ENCODE measurements at regions of chr1 and their contacts with region 1.

Region 1: DNA sequence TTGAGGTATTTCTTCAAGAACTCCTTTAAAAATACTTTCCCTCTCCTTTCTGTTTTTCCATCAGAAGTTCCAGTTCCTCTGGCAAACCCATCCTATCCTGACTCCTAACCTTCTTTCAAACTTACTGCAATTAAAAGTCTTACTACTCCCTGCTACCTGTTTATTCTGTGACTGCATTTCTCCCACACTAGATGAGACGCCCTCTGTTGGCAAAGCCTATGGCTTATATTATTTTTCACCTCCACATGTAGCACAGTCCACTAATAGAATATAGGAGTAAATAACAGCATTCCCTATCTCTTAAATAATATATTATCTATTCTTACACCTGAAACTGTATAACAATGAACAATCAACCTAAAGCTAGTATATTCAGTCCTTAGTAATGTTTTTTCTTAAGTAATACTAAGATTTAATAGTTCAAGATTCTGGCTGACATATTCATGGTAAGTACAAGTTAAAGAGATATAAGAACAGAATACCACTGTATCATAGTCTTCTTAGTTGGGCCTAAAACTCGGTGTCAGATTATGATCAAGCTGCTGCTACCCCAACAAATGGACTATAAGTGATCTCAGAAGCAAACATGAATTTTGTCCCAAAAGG is 54.8 kb downstream of the RAB3GAP2 start:
- DNase-seq: peak; percentile 29
- ATAC-seq: no peak
- H3K4me3 ChIP-seq: no peak overlapping the region
- H3K4me3 Mint-ChIP-seq: no peak overlapping the region
- H3K27ac ChIP-seq: no peak overlapping the region
- H3K27ac Mint-ChIP-seq: peak overlapping the region; percentile 3
- H3K4me1 ChIP-seq: peaks cover 18 to 31% of the 10 kb centered on the region in 2 donors
- H3K4me1 Mint-ChIP-seq: peaks cover 48% of the 10 kb centered on the region
- H3K27me3 ChIP-seq: no peaks in the 10 kb centered on the region
- H3K27me3 Mint-ChIP-seq: no peaks in the 10 kb centered on the region
- CTCF ChIP-seq: peak; percentile 61

Region 2: DNA sequence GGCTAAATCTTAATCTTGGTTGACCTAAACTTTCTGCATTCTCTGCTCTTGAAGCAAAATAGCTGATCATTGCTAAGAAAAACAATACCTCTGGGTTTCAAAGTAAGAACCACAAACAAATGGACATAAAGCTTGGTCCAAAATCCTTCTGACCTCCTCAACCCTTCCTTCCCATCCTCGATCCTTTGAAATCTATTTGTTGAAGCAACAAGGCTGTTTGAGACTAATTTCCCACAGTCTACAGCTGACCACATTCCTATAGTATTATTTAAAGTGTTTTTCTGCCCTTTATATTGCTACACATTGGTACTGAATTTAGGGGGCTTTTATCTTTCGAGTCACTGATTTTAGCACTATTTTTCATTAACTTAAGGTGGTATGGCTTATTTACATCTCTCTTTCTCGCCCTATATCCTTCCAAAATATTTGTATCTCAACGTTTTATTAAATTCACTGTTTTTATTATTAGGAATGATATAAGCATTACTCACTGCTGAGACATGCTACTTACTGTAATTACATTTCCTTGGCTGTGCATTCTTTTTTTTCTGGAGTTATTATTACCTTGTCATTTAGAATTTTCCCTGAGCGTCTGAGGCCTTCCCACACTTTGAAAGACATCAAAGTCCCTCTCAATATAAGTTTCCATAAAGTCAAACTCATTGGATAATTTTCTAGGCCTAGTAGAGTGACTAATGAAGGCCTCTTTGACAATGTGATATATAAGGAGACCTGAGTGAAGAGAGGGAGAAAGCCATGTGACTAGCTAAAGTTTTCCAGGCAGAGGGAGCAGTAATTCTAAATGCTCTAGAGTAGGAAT is 19.1 kb before region 1 on chr1:
- CTCF ChIA-PET with region 1: no interaction called
- POLR2A ChIA-PET with region 1: no interaction called
- intact Hi-C with region 1: no loop called
- DNase-seq: no peak
- ATAC-seq: no peak
- H3K4me3 ChIP-seq: no peak overlapping the region
- H3K4me3 Mint-ChIP-seq: no peak overlapping the region
- H3K27ac ChIP-seq: no peak overlapping the region
- H3K27ac Mint-ChIP-seq: no peak overlapping the region
- H3K4me1 ChIP-seq: no peaks in the 10 kb centered on the region
- H3K4me1 Mint-ChIP-seq: no peaks in the 10 kb centered on the region
- H3K27me3 ChIP-seq: no peaks in the 10 kb centered on the region
- H3K27me3 Mint-ChIP-seq: no peaks in the 10 kb centered on the region
- CTCF ChIP-seq: no peak

Region 3: GRCh38 chr1:220410611-220411010 is 193.1 kb after region 1 on chr1:
- CTCF ChIA-PET with region 1: no interaction called
- POLR2A ChIA-PET with region 1: no interaction called
- intact Hi-C with region 1: no loop called
- DNase-seq: no peak
- ATAC-seq: no peak
- H3K4me3 ChIP-seq: no peak overlapping the region
- H3K4me3 Mint-ChIP-seq: no peak overlapping the region
- H3K27ac ChIP-seq: no peak overlapping the region
- H3K27ac Mint-ChIP-seq: no peak overlapping the region
- H3K4me1 ChIP-seq: no peaks in the 10 kb centered on the region
- H3K4me1 Mint-ChIP-seq: no peaks in the 10 kb centered on the region
- H3K27me3 ChIP-seq: peaks cover 0 to 4% (median 1%) of the 10 kb centered on the region in 4 experiments
- H3K27me3 Mint-ChIP-seq: peaks cover 10% of the 10 kb centered on the region
- CTCF ChIP-seq: no peak

Region 4: GRCh38 chr1:220527908-220528678 is 310.6 kb after region 1 on chr1 and contains the start of gene MARK1:
- CTCF ChIA-PET with region 1: no interaction called
- POLR2A ChIA-PET with region 1: no interaction called
- intact Hi-C with region 1: loop called (anchors 5 kb)
- DNase-seq: peak; percentile 55
- ATAC-seq: peak; percentile 64
- H3K4me3 ChIP-seq: peak within 1 kb of the TSS in 4 of 5 experiments; percentile 39 to 70 (median 56)
- H3K4me3 Mint-ChIP-seq: peak within 1 kb of the TSS; percentile 90
- H3K27ac ChIP-seq: peak within 1 kb of the TSS in 1 of 2 donors; percentile 48
- H3K27ac Mint-ChIP-seq: peak within 1 kb of the TSS; percentile 77
- H3K4me1 ChIP-seq: peaks cover 17 to 21% of the 10 kb centered on the region in 2 donors
- H3K4me1 Mint-ChIP-seq: peaks cover 23% of the 10 kb centered on the region
- H3K27me3 ChIP-seq: peaks cover 0 to 53% (median 28%) of the 10 kb centered on the region in 4 experiments
- H3K27me3 Mint-ChIP-seq: peaks cover 46% of the 10 kb centered on the region
- CTCF ChIP-seq: no peak
- total RNA-seq, gene MARK1: 3.8 and 3.9 TPM in 2 replicates

Measured in B cell (primary cell).